BJ (cell line): ENCODE measurements at regions of chr12 and their contacts with region 1.

Region 1: GRCh38 chr12:95336390-95337067 is 118.9 kb downstream of the VEZT start:
- DNase-seq: peak; percentile 41
- H3K4me3 ChIP-seq: no peak overlapping the region
- H3K27me3 ChIP-seq: no peaks in the 10 kb centered on the region
- CTCF ChIP-seq: peak; percentile 90

Region 2: DNA sequence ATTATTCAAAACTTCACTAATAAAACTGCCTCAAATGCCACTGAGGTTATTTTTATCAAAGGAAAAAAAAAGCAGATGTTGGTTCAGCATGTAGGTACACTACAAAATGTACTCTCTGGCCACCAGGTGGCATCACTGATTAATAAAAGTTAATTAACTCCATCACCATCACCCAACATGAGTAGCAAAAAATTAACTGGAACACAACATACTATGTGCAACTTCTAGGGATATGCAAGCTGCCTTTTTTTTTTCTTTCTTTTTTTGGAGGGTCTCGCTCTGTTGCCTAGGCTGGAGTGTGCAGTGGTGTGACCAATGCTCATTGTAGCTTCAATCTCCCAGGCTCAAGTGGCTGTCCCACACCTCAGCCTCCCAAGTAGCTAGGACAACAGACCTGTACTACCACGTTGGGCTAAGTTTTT is 219.3 kb before region 1 on chr12:
- CTCF ChIA-PET with region 1: interaction called, 53 read pairs
- POLR2A ChIA-PET with region 1: interaction called, 5 read pairs
- DNase-seq: no peak
- H3K4me3 ChIP-seq: no peak overlapping the region
- H3K27me3 ChIP-seq: no peaks in the 10 kb centered on the region
- CTCF ChIP-seq: peak; percentile 55

Region 3: GRCh38 chr12:95231190-95231589 is 105.3 kb before region 1 on chr12:
- CTCF ChIA-PET with region 1: no interaction called
- POLR2A ChIA-PET with region 1: no interaction called
- DNase-seq: no peak
- H3K4me3 ChIP-seq: no peak overlapping the region
- H3K27me3 ChIP-seq: no peaks in the 10 kb centered on the region
- CTCF ChIP-seq: no peak

Region 4: DNA sequence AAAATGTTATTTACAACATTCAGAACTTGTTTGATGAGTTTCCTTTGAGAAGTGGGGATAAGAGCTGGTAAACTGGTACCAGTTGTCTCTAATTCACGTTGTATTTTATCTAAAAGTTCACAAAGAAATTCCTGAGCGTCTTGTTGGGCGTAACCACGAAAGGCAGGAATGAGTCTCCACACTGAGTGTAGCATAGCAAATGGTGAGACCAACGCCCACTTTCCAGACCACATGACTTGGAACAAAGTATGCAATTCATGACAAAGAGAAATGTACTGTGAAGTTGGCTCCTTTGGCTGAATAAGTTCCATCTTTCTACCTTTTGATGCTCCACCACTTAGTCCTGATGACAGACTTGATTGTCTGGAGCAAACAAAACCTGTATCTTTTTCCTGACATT is 196.3 kb after region 1 on chr12:
- CTCF ChIA-PET with region 1: interaction called, 18 read pairs
- POLR2A ChIA-PET with region 1: no interaction called
- DNase-seq: no peak
- H3K4me3 ChIP-seq: no peak overlapping the region
- H3K27me3 ChIP-seq: no peaks in the 10 kb centered on the region
- CTCF ChIP-seq: no peak

Region 5: DNA sequence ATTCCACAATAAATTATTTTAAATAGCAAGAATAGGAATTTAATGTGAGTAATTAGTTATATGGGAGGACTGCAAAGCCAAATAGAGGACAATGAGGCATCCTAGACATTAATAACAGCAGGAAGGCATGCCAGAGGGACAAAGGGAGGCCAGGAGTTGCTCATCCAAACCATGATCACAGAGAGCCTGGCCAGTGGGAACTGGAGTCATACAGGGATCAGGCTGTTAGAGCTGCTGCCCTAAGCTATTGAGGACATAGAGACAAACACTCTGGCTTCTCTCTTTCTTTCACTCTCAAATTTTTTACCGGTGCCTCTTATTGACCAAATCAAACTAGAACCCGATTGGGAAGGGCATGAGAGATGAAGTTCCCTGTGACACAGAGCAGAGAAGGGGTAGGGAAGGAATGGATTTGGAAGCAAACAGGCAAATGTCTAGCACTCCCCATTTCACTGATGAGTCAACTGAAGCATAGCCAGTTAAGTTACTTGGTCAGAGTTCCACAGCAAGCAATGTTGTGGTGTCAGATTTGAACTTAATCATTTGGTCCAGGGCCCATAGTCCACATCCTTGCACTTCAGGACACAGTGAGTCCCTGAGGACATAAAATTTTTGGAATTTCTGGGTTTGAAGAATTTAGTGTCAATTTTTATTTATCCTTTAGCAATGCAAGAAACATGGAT is 1135.0 kb after region 1 on chr12:
- CTCF ChIA-PET with region 1: no interaction called
- POLR2A ChIA-PET with region 1: no interaction called
- DNase-seq: no peak
- H3K4me3 ChIP-seq: no peak overlapping the region
- H3K27me3 ChIP-seq: no peaks in the 10 kb centered on the region
- CTCF ChIP-seq: no peak